Calu3 (cell line): ENCODE measurements at regions of chr17 and their contacts with region 1.

Region 1: GRCh38 chr17:82297714-82298537 is 19.5 kb downstream of the CD7 start:
- DNase-seq: peak; percentile 93
- H3K4me3 Mint-ChIP-seq: peak overlapping the region; percentile 74
- H3K27ac Mint-ChIP-seq: peak overlapping the region; percentile 85
- H3K4me1 Mint-ChIP-seq: peaks cover 63% of the 10 kb centered on the region
- H3K27me3 Mint-ChIP-seq: peaks cover 6% of the 10 kb centered on the region
- CTCF ChIP-seq: no peak

Region 2: DNA sequence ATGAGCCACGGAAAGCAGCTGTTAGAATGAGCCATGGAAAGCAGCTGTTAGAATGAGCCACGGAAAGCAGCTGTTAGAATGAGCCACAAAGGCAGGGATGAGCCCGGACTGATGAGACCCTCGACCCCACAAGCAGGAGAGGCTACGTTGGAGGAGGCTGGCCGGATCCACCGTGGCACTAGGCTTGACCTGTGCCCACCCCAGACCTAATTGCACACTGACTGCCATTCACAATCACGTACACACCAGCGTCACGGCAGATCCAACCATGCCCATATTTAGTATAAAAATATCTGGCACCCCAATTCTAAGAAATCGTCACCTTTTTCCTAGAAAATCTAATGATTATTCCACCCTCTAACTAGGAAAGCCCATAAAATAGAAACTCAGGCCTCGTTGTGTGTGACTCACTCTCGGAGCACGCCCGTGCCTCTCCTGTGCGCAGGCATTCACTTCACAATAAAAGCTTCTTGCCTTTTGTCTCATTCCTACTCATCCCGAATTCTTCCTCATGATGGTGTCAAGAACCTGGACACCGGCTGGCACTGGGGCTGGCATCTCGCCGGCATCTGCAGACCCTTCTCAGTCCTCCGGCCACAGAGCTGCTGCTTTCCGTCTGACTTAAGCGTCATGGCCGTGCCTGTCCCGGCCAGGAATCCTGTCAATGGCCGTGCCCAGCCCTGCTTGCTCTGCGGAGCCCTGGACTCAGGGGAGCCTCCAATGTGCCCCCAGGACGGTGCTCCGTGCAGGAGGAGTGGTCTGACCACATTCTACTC is 41.1 kb after region 1 on chr17:
- CTCF ChIA-PET with region 1: no interaction called
- intact Hi-C with region 1: loop called (anchors 5 kb)
- DNase-seq: peak; percentile 62
- H3K4me3 Mint-ChIP-seq: peak overlapping the region; percentile 64
- H3K27ac Mint-ChIP-seq: peak overlapping the region; percentile 85
- H3K4me1 Mint-ChIP-seq: peaks cover 34% of the 10 kb centered on the region
- H3K27me3 Mint-ChIP-seq: no peaks in the 10 kb centered on the region
- CTCF ChIP-seq: no peak